ENCODE measurements at regions of chr5 and their contacts with region 1.

Region 1: DNA sequence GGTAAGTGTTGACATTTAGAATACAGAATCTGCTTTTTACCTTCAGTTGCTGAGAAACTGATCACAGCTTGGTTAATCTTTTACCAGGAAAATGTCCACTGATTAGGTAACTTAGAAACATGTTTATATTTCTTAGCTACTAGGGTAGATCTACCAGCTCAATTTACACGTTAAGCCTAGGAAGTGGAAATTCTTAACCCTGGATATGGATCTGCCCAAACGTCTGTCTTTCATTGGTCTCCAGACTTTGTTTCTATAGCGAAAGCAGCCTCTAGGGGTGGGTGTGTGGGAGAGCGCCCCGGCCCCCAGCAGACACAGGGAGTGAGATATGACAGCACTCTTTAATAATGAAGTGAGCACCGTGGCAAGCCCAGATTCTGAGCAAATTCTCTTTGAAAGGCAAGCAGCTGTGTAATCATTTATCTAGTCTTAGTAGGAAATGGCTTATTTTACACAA is 141.6 kb upstream of the ZNF608 start:
- DNase-seq: peak; percentile 70
- H3K4me3 Mint-ChIP-seq: peak overlapping the region; percentile 55
- H3K27ac Mint-ChIP-seq: peak overlapping the region; percentile 88
- H3K4me1 Mint-ChIP-seq: peaks cover 22% of the 10 kb centered on the region
- H3K27me3 Mint-ChIP-seq: no peaks in the 10 kb centered on the region
- CTCF ChIP-seq: no peak

Region 2: DNA sequence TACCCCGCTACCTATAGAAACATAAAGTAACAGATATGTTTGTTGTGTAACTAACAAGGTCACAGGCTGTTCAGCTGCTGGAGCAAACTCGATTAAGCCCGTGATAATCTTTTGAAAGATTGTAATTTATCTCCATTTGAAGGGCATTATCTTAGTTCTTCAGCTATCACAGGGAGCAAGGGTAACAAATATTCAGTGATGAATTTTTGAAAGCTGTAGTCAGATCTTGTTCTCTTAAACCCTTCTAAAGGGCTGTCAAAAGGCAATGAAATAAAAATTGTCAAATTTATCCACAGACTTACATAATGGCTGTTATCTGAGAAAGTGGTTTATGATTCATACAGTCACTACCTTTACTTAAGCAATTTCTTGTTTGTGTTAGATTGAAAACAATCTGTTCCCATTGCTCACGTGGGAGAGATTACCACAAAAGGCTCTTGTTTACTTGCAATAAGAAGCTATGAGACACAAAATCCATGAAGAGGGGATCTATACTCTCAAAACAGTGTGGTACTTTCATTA is 63.4 kb before region 1 on chr5:
- CTCF ChIA-PET with region 1: no interaction called
- intact Hi-C with region 1: loop called (anchors 5 kb)
- DNase-seq: peak; percentile 20
- H3K4me3 Mint-ChIP-seq: no peak overlapping the region
- H3K27ac Mint-ChIP-seq: peak overlapping the region; percentile 12
- H3K4me1 Mint-ChIP-seq: peaks cover 32% of the 10 kb centered on the region
- H3K27me3 Mint-ChIP-seq: no peaks in the 10 kb centered on the region
- CTCF ChIP-seq: no peak